ENCODE measurements at regions of chr9 and their contacts with region 1.

Region 1: DNA sequence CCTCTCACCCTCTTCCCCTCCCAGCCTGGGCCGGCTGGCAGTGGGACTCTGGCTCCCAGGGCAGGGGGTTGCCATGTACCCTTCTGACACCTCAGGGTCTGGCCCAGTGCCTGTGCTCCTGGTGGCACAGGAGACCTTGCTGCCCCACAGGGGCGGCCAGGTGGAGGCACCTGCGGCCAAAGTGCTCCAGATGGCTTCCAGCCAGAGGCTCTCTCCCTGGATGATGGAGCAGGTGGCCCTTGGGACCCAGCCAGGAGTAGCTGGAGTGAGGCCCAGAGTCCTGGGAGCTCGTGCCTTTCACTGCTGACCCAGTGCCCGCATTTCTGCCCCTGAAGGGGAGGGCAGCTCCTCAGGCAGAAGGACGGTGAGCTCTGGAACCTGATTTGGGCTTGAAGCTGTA is 87.3 kb downstream of the NTNG2 start:
- DNase-seq: no peak
- H3K4me3 ChIP-seq: no peak overlapping the region
- H3K27ac ChIP-seq: no peak overlapping the region
- H3K27me3 ChIP-seq: peaks cover 25% of the 10 kb centered on the region
- CTCF ChIP-seq: no peak

Region 2: GRCh38 chr9:131755541-131756198 is 493.5 kb before region 1 on chr9:
- CTCF ChIA-PET with region 1: interaction called, 43 read pairs
- POLR2A ChIA-PET with region 1: no interaction called
- DNase-seq: no peak
- H3K4me3 ChIP-seq: no peak overlapping the region
- H3K27ac ChIP-seq: no peak overlapping the region
- H3K27me3 ChIP-seq: peaks cover 29% of the 10 kb centered on the region
- CTCF ChIP-seq: peak; percentile 87

Region 3: GRCh38 chr9:131899296-131900228 is 349.6 kb before region 1 on chr9:
- CTCF ChIA-PET with region 1: no interaction called
- POLR2A ChIA-PET with region 1: no interaction called
- DNase-seq: no peak
- H3K4me3 ChIP-seq: no peak overlapping the region
- H3K27ac ChIP-seq: no peak overlapping the region
- H3K27me3 ChIP-seq: no peaks in the 10 kb centered on the region
- CTCF ChIP-seq: no peak

Measured in AG04450 (cell line).